Activated naive CD8-positive, alpha-beta T cell treated with anti-CD3 and anti-CD28 coated beads, Interleukin-2, amount 10 ng/mL, durations not matched to agents 7 days and 5 days (primary cell): ENCODE measurements at regions of chr6 and their contacts with region 1.

Region 1: GRCh38 chr6:158644231-158645063 is at the start of gene DYNLT1:
- DNase-seq: peak; percentile 97
- ATAC-seq: peak; percentile 76
- H3K4me3 Mint-ChIP-seq: peak within 1 kb of the TSS; percentile 99
- H3K27ac Mint-ChIP-seq: peak within 1 kb of the TSS; percentile 94
- H3K4me1 Mint-ChIP-seq: peaks cover 53% of the 10 kb centered on the region
- H3K27me3 Mint-ChIP-seq: no peaks in the 10 kb centered on the region
- total RNA-seq, gene DYNLT1: 99.9 to 102 TPM

Region 2: DNA sequence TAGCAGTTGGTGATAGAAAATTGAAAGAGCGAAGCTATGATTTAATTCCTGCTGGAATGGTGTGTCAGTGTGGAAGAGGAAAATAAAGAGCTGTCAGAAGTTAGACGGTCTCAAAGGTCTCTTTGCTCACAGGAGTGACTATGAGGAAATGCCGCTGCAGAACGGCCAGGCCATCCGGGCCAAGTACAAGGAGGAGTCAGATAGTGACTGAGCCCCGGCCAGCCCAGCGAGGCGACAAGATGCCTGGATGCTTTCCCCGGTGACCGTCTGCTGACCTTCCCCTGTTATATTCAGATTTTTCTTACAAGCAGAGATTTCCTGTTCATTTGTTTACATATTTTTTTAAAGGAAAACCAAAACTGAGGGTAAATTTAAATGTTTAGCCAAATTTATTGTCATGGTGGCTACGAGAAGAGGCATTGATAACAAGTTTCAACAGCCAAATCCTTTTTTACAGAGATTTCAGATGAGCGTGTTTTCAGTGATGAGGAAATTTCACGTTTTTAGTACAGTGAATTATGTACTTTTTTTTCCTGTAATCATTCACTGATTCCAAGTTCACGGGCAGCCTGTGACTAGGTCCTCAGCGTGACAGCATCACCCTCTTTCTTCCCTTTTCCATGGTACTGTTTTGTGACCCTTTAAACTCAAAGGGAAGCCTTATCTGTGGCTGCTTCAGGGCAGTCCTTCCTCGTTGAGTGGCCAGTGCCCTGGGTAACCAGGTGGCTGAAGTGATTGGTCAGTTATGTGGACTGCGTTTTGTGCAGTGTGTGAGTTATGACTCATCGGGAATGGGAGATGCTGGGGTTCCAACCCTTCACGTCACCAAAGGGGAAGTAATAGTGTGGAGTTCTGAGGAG is 12.5 kb before region 1 on chr6:
- POLR2A ChIA-PET with region 1: interaction called, 19 read pairs
- DNase-seq: no peak
- ATAC-seq: no peak
- H3K4me3 Mint-ChIP-seq: no peak overlapping the region
- H3K27ac Mint-ChIP-seq: peak overlapping the region; percentile 66
- H3K4me1 Mint-ChIP-seq: peaks cover 36% of the 10 kb centered on the region
- H3K27me3 Mint-ChIP-seq: no peaks in the 10 kb centered on the region